HepG2 (cell line): ENCODE measurements at regions of chr2 and their contacts with region 1.

Region 1: GRCh38 chr2:172427256-172427989 is at the start of gene ITGA6:
- DNase-seq: peak; percentile 89
- ATAC-seq: peak; percentile 87
- H3K4me3 ChIP-seq: peak within 1 kb of the TSS; percentile 65 to 97 (median 90)
- H3K27ac ChIP-seq: peak within 1 kb of the TSS; percentile 86
- H3K4me1 ChIP-seq: peaks cover 39% of the 10 kb centered on the region
- H3K27me3 ChIP-seq: peaks cover 1 to 11% of the 10 kb centered on the region in 2 experiments; a peak in 2 of 5 replicates
- CTCF ChIP-seq: peak; percentile 53; the same call in 1 of the 2 replicates
- EP300 ChIP-seq: peak in 1 of 2 experiments; percentile 28; a peak in 1 of 4 replicates
- POLR2A ChIP-seq: peak; percentile 91 to 93
- RAD21 ChIP-seq: peak; percentile 58; the same call in 1 of the 2 replicates
- total RNA-seq, gene ITGA6: 49.6 and 92.5 TPM in 2 replicates

Region 2: DNA sequence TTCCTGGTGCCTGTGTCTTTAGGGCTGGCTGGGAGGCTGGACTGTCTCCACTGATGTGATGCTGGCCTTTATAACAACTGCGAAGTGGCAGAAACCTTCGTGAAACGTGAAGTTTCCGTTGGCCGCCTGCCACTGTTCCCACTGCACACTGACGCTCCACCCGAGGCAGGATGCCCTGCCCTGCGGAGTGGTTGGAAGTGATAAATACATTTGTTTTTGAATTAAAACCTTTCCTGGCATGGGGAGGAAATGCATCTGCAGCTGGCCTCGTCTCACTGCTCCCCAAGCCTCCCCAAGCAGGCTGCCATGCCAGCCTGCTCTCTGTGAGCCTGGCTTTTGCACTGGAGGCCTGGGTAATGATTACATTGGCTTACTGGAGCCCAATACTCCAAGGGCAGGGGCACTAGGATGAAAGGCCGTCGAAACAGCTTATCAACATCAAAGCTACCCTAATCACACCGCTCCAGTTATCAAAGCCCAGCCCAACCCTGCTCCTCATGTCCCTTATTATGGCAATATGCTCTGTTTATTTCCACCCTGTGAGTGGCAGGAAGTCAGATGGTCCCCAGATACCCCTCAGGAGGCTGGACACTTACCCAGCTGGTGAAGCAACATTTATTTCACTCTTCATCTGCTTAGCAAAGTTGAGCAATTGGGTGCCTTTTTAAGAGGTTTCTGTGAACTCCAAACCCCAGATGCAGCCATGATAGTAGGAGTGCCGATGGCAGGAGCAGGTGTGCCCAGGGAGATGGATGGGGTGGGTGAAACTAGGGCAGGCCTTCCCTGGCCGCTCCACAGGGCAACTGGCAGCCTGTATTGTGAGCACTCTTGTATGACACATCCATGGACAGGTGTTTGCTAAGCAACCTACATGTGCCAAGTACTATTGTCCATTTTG is 97.4 kb before region 1 on chr2:
- CTCF ChIA-PET with region 1: no interaction called
- POLR2A ChIA-PET with region 1: no interaction called
- in situ Hi-C with region 1: no loop called
- intact Hi-C with region 1: loop called (anchors 2 kb)
- DNase-seq: peak; percentile 85
- ATAC-seq: peak; percentile 92
- H3K4me3 ChIP-seq: no peak overlapping the region; a peak in 1 of 6 replicates
- H3K27ac ChIP-seq: no peak overlapping the region
- H3K4me1 ChIP-seq: peaks cover 37% of the 10 kb centered on the region
- H3K27me3 ChIP-seq: peaks cover 0 to 4% of the 10 kb centered on the region in 2 experiments; a peak in 1 of 5 replicates
- CTCF ChIP-seq: no peak
- EP300 ChIP-seq: peak in 1 of 2 experiments; percentile 67; a peak in 2 of 4 replicates
- POLR2A ChIP-seq: no peak
- RAD21 ChIP-seq: no peak

Region 3: DNA sequence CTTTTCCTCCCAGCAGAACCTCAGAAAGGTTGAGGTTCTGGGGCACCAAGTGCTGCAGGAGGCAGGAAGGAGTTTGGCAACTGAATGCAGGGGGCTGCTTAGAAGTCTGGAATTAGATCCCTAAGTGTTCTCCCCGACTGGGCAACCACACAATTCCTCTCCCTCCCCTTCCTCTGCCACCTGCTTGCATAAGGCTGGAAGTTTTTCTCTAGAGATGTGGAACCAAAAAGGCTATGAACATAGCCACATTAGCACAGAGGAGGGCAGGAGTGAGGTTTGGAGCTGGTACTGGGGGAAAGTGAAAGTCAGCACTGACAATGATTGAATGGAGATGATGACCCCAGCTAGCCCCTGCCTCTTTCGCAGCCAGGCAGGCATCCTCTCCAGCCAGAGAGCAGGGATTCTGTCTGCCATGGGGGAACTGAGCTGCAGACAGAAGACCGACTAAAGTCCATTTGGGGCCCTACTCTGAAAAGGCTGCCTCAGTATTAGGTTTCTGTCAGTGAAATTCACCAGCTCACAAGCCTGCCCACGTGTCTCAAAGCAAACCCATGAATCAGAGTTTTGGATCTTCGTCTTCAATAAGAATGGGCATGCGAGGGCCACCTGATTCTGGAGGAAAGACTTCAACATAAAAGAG is 87.9 kb before region 1 on chr2:
- CTCF ChIA-PET with region 1: no interaction called
- POLR2A ChIA-PET with region 1: interaction called, 9 read pairs
- in situ Hi-C with region 1: no loop called
- intact Hi-C with region 1: loop called (anchors 1 kb)
- DNase-seq: peak; percentile 89
- ATAC-seq: peak; percentile 83
- H3K4me3 ChIP-seq: peak overlapping the region; percentile 19 to 65 (median 62)
- H3K27ac ChIP-seq: peak overlapping the region; percentile 59
- H3K4me1 ChIP-seq: peaks cover 80% of the 10 kb centered on the region
- H3K27me3 ChIP-seq: peaks cover 0 to 3% of the 10 kb centered on the region in 2 experiments; a peak in 1 of 5 replicates
- CTCF ChIP-seq: peak; percentile 52
- EP300 ChIP-seq: peak; percentile 72 to 79; a peak in 3 of 4 replicates
- POLR2A ChIP-seq: peak in 1 of 2 experiments; percentile 40; a peak in 2 of 4 replicates
- RAD21 ChIP-seq: peak; percentile 51; the same call in 1 of the 2 replicates

Region 4: GRCh38 chr2:172442072-172442895 is 14.9 kb after region 1 on chr2:
- CTCF ChIA-PET with region 1: no interaction called
- POLR2A ChIA-PET with region 1: interaction called, 88 read pairs
- in situ Hi-C with region 1: no loop called
- intact Hi-C with region 1: loop called (anchors 2 kb)
- DNase-seq: peak; percentile 75
- ATAC-seq: peak; percentile 77
- H3K4me3 ChIP-seq: no peak overlapping the region
- H3K27ac ChIP-seq: peak overlapping the region; percentile 5
- H3K4me1 ChIP-seq: peaks cover 60% of the 10 kb centered on the region
- H3K27me3 ChIP-seq: no peaks in the 10 kb centered on the region
- CTCF ChIP-seq: no peak
- EP300 ChIP-seq: peak in 1 of 2 experiments; percentile 25; a peak in 1 of 4 replicates
- POLR2A ChIP-seq: no peak
- RAD21 ChIP-seq: no peak

Region 5: GRCh38 chr2:172555522-172556283 is 128.3 kb after region 1 on chr2 and contains the start of gene PDK1:
- CTCF ChIA-PET with region 1: no interaction called
- POLR2A ChIA-PET with region 1: interaction called, 4 read pairs
- in situ Hi-C with region 1: no loop called
- intact Hi-C with region 1: loop called (anchors 5 kb)
- DNase-seq: peak; percentile 83
- ATAC-seq: peak; percentile 96
- H3K4me3 ChIP-seq: peak within 1 kb of the TSS; percentile 86 to 96 (median 92)
- H3K27ac ChIP-seq: peak within 1 kb of the TSS; percentile 77
- H3K4me1 ChIP-seq: peaks cover 43% of the 10 kb centered on the region
- H3K27me3 ChIP-seq: no peaks in the 10 kb centered on the region; a peak in 1 of 5 replicates
- CTCF ChIP-seq: peak; percentile 22; the same call in 1 of the 2 replicates
- EP300 ChIP-seq: no peak
- POLR2A ChIP-seq: peak; percentile 95 to 96
- RAD21 ChIP-seq: 0 out of 2 replicates have a peak, but pooled peaks have one; percentile 52
- total RNA-seq, gene PDK1: 11.9 and 12.0 TPM in 2 replicates